Calu3 (cell line): ENCODE measurements at regions of chr6 and their contacts with region 1.

Region 1: GRCh38 chr6:165231581-165232561 is 77.5 kb downstream of the C6orf118 start:
- DNase-seq: peak; percentile 33
- H3K4me3 Mint-ChIP-seq: no peak overlapping the region
- H3K27ac Mint-ChIP-seq: no peak overlapping the region
- H3K4me1 Mint-ChIP-seq: peaks cover 7% of the 10 kb centered on the region
- H3K27me3 Mint-ChIP-seq: no peaks in the 10 kb centered on the region
- CTCF ChIP-seq: peak; percentile 63

Region 2: GRCh38 chr6:164942271-164942765 is 289.6 kb before region 1 on chr6:
- CTCF ChIA-PET with region 1: no interaction called
- intact Hi-C with region 1: loop called (anchors 5 kb)
- DNase-seq: no peak
- H3K4me3 Mint-ChIP-seq: no peak overlapping the region
- H3K27ac Mint-ChIP-seq: no peak overlapping the region
- H3K4me1 Mint-ChIP-seq: no peaks in the 10 kb centered on the region
- H3K27me3 Mint-ChIP-seq: no peaks in the 10 kb centered on the region
- CTCF ChIP-seq: no peak

Region 3: GRCh38 chr6:165055231-165055630 is 176.6 kb before region 1 on chr6:
- CTCF ChIA-PET with region 1: interaction called, 14 read pairs
- intact Hi-C with region 1: loop called (anchors 1 kb)
- DNase-seq: peak; percentile 24
- H3K4me3 Mint-ChIP-seq: no peak overlapping the region
- H3K27ac Mint-ChIP-seq: no peak overlapping the region
- H3K4me1 Mint-ChIP-seq: no peaks in the 10 kb centered on the region
- H3K27me3 Mint-ChIP-seq: no peaks in the 10 kb centered on the region
- CTCF ChIP-seq: no peak

Region 4: GRCh38 chr6:165766457-165766856 is 534.6 kb after region 1 on chr6:
- CTCF ChIA-PET with region 1: no interaction called
- intact Hi-C with region 1: no loop called
- DNase-seq: no peak
- H3K4me3 Mint-ChIP-seq: no peak overlapping the region
- H3K27ac Mint-ChIP-seq: no peak overlapping the region
- H3K4me1 Mint-ChIP-seq: no peaks in the 10 kb centered on the region
- H3K27me3 Mint-ChIP-seq: no peaks in the 10 kb centered on the region
- CTCF ChIP-seq: no peak